H1 (cell line): ENCODE measurements at regions of chr1 and their contacts with region 1.

Region 1: GRCh38 chr1:36134505-36135329 is 9.7 kb upstream of the COL8A2 start:
- DNase-seq: peak in 1 of 2 experiments; percentile 90
- H3K4me3 ChIP-seq: no peak overlapping the region
- H3K27ac ChIP-seq: no peak overlapping the region
- H3K4me1 ChIP-seq: peaks cover 0 to 2% (median 0%) of the 10 kb centered on the region in 4 experiments; a peak in 2 of 7 replicates
- H3K27me3 ChIP-seq: no peaks in the 10 kb centered on the region
- CTCF ChIP-seq: peak; percentile 77 to 91 (median 83)
- EP300 ChIP-seq: no peak
- POLR2A ChIP-seq: no peak
- RAD21 ChIP-seq: peak; percentile 90 to 92

Region 2: DNA sequence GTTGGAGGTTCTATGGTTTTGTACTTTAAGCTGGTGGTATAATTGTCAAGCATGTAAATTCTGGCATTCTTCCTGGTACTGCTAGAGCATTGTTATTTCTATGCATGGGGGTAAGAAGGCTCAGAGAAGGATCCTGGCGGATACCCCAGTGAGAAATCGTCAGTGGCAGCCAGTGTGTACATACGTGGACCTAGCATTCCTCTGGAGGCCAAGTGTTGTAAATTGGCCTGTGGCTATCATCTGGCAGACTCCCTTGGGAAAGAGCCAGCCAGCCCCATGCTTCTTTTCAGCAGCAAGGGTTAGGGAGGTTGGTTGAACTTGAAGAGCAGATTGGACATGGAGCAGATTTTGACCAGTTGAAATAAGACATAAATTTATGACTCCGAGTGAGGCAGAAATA is 209.0 kb before region 1 on chr1:
- CTCF ChIA-PET with region 1: no interaction called
- POLR2A ChIA-PET with region 1: no interaction called
- DNase-seq: no peak
- H3K4me3 ChIP-seq: no peak overlapping the region
- H3K27ac ChIP-seq: no peak overlapping the region
- H3K4me1 ChIP-seq: no peaks in the 10 kb centered on the region; a peak in 1 of 7 replicates
- H3K27me3 ChIP-seq: no peaks in the 10 kb centered on the region
- CTCF ChIP-seq: no peak
- EP300 ChIP-seq: no peak
- POLR2A ChIP-seq: no peak
- RAD21 ChIP-seq: no peak

Region 3: DNA sequence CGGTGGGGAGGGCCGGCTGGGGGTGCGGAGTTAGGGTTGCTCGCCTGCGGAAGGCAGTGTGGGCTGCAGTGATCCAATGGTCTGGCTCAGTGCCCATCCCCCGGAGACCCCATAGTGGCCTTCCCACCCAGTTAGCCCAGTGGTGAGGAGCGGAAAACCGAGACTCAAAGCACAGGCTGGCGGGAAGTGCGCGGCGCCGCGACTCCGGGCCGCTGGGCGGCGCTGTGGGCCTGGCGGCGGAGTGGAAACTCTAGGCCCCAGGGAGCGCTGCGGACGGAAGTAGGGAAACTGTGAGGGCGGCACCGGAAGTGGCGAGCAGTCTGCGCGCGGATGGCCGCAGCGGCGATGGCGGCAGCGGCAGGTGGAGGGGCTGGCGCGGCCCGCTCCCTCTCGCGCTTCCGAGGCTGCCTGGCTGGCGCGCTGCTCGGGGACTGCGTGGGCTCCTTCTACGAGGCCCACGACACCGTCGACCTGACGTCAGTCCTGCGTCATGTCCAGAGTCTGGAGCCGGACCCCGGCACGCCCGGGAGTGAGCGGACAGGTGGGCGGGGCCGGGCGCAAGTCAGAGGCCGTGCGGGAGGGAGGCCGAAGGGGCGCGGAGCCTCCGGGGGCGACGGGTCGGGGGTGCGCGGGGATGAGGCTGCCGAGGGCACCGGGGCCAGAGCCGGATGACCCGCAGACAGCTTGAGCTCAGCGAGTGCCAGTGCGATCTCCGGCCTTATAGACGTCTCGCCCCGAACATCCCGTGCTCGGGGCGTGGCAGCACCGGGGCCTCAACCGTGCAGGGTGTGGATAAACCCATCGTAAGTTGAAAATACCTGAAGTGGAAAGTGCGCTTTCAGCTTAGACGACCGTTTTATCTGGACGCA is 45.9 kb before region 1 on chr1 and contains the start of gene ADPRS:
- CTCF ChIA-PET with region 1: interaction called, 738 read pairs
- POLR2A ChIA-PET with region 1: no interaction called
- DNase-seq: peak; percentile 70 to 96
- H3K4me3 ChIP-seq: peak within 1 kb of the TSS; percentile 70 to 94 (median 81)
- H3K27ac ChIP-seq: peak within 1 kb of the TSS; percentile 36; the same call in 1 of the 2 replicates
- H3K4me1 ChIP-seq: peaks cover 0 to 18% (median 12%) of the 10 kb centered on the region in 4 experiments; a peak in 5 of 7 replicates
- H3K27me3 ChIP-seq: peaks cover 0 to 3% (median 0%) of the 10 kb centered on the region in 4 experiments; a peak in 2 of 7 replicates
- CTCF ChIP-seq: peak in 2 of 3 experiments; percentile 96 to 98; a peak in 3 of 4 replicates
- EP300 ChIP-seq: peak in 1 of 2 experiments; percentile 81; a peak in 1 of 3 replicates
- POLR2A ChIP-seq: peak in 1 of 2 experiments; percentile 98; a peak in 2 of 3 replicates
- RAD21 ChIP-seq: peak; percentile 30 to 59; a peak in 3 of 4 replicates
- total RNA-seq, gene ADPRS: 22.9 and 23.9 TPM in 2 replicates

Region 4: DNA sequence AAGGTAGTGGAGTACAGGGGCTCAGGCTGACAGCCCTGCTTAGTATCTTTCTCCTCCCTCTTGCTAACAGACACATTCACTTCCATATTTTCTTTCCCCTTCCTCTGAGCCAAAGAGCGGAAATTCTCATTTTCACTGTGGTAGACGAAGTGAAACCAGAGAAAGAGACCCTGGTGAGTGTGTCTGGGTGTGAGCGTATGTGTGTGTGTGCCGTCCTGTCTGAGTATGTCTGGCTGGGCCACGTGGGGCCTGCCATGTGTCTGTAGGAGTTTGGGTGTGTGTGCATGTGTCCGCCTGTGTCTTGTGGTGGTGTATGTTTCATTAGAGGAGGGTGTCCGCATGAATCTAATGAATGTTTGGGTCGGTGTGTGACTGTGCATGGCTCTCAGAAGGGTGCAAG is 11.4 kb before region 1 on chr1:
- CTCF ChIA-PET with region 1: interaction called, 738 read pairs
- POLR2A ChIA-PET with region 1: interaction called, 6 read pairs
- DNase-seq: no peak
- H3K4me3 ChIP-seq: no peak overlapping the region
- H3K27ac ChIP-seq: no peak overlapping the region
- H3K4me1 ChIP-seq: peaks cover 0 to 13% (median 6%) of the 10 kb centered on the region in 4 experiments; a peak in 6 of 7 replicates
- H3K27me3 ChIP-seq: peaks cover 16 to 38% (median 30%) of the 10 kb centered on the region in 4 experiments
- CTCF ChIP-seq: no peak
- EP300 ChIP-seq: no peak
- POLR2A ChIP-seq: no peak
- RAD21 ChIP-seq: no peak

Region 5: DNA sequence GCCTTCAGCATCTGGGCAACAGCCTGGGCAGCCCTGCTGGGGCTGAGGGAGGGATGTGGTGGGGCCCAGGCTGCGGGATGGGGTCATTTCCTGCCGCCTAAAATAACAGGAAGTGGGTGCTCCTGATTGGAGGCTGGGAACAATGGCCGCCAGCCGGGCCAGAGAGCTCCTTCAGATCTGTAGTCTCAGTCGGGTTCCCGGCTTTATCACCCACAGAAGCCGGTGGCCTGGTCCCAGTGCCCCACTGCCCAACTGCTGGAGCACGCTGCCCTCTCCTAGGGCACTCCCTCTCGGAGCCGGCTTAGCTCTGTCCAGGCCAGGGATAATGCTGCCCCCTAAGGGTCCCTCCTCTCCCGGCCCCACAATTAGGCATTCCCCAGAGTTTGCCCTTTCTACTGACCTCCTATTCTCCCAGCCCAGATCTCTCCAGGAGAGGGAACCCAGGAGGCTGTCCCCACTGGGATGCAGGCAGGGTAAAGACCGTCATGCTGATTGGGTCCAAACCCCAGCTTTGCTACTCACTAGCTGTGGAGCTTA is 26.3 kb after region 1 on chr1:
- CTCF ChIA-PET with region 1: interaction called, 15 read pairs
- POLR2A ChIA-PET with region 1: interaction called, 3 read pairs
- DNase-seq: peak in 1 of 2 experiments; percentile 82
- H3K4me3 ChIP-seq: peak overlapping the region; percentile 29 to 60 (median 48)
- H3K27ac ChIP-seq: peak overlapping the region; percentile 89; the same call in 1 of the 2 replicates
- H3K4me1 ChIP-seq: peaks cover 0 to 22% (median 13%) of the 10 kb centered on the region in 4 experiments; a peak in 6 of 7 replicates
- H3K27me3 ChIP-seq: no peaks in the 10 kb centered on the region
- CTCF ChIP-seq: peak; percentile 54 to 69 (median 59)
- EP300 ChIP-seq: no peak
- POLR2A ChIP-seq: peak; percentile 93 to 96
- RAD21 ChIP-seq: peak; percentile 42 to 45